Posterior vena cava (tissue), 2 donors: ENCODE measurements at regions of chr7 and their contacts with region 1.

Region 1: GRCh38 chr7:47970761-47971160 is 8.7 kb downstream of the HUS1 start:
- DNase-seq: no peak

Region 2: GRCh38 chr7:46369933-46370654 is 1600.7 kb before region 1 on chr7:
- intact Hi-C with region 1: loop called in 1 of 2 experiments (anchors 5 kb)
- DNase-seq: no peak

Region 3: DNA sequence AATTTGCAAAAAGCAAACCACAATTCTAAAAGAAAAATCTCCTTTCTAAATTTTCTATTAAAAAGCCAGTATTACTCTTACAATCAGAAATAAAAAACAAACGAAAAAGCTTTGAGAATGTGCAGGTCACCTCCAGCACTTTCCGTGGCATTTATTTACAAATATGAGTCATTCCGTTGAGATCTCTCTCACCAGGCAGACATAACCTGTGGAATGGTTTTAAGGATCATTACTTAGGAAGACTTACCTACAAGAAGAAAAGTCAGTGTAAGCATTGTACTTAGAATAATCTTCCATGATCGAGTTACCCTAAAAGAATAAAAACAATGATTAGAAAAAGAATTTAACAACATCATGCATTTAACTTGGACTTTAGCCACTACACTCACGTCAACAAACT is 54.9 kb after region 1 on chr7:
- intact Hi-C with region 1: no loop called
- DNase-seq: no peak